Activated CD4-positive, alpha-beta T cell treated with anti-CD3 and anti-CD28 coated beads, Interleukin-2, amount 10 ng/mL, durations not matched to agents 24 days and 14 days (primary cell): ENCODE measurements at regions of chr9 and their contacts with region 1.

Region 1: DNA sequence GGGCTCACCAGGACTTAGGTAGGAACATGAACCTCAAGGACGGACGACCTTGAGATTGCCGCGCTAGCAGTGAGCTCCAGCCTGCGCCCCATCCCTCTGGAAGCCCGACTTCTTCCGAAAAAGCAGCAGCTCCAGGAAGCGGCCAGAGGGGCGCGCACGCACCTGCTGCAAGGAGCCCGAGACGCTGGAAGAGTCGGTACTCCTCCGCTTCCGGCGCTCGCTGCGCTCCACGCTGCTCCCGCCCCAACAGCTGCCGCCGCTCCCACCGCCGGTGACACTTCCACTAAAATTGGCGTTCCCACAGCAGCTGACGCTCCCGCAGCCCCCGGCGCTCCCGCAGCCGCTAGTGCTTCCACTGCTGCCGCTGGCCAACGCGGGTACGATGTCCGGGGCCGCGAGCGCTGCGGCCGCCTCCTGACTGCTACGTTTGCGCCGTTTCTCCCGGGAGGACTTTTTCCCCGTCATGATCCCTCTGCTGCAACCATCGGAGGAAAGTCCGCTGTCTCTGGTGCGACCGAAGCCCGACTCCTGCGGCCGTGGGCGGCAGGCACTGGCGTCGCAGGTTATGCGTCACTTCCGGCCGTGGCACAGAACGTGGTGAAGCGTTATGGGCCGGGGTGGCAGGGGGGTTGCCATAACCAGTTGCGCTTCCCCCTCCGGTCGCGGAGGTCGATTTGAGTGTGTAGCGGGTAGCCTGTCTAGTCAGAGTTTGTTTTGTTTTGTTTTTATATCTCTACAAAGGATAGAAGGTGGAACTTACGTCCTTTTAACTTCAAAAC is at the start of gene CAAP1:
- DNase-seq: peak; percentile 97
- H3K4me3 Mint-ChIP-seq: peak within 1 kb of the TSS; percentile 91
- H3K27ac Mint-ChIP-seq: peak within 1 kb of the TSS; percentile 97
- H3K4me1 Mint-ChIP-seq: peaks cover 27% of the 10 kb centered on the region
- H3K27me3 Mint-ChIP-seq: no peaks in the 10 kb centered on the region
- total RNA-seq, gene CAAP1: 19.9 and 23.1 TPM in 2 replicates

Region 2: GRCh38 chr9:26710008-26710407 is 182.4 kb before region 1 on chr9:
- intact Hi-C with region 1: no loop called
- DNase-seq: no peak
- H3K4me3 Mint-ChIP-seq: no peak overlapping the region
- H3K27ac Mint-ChIP-seq: no peak overlapping the region
- H3K4me1 Mint-ChIP-seq: no peaks in the 10 kb centered on the region
- H3K27me3 Mint-ChIP-seq: no peaks in the 10 kb centered on the region

Region 3: DNA sequence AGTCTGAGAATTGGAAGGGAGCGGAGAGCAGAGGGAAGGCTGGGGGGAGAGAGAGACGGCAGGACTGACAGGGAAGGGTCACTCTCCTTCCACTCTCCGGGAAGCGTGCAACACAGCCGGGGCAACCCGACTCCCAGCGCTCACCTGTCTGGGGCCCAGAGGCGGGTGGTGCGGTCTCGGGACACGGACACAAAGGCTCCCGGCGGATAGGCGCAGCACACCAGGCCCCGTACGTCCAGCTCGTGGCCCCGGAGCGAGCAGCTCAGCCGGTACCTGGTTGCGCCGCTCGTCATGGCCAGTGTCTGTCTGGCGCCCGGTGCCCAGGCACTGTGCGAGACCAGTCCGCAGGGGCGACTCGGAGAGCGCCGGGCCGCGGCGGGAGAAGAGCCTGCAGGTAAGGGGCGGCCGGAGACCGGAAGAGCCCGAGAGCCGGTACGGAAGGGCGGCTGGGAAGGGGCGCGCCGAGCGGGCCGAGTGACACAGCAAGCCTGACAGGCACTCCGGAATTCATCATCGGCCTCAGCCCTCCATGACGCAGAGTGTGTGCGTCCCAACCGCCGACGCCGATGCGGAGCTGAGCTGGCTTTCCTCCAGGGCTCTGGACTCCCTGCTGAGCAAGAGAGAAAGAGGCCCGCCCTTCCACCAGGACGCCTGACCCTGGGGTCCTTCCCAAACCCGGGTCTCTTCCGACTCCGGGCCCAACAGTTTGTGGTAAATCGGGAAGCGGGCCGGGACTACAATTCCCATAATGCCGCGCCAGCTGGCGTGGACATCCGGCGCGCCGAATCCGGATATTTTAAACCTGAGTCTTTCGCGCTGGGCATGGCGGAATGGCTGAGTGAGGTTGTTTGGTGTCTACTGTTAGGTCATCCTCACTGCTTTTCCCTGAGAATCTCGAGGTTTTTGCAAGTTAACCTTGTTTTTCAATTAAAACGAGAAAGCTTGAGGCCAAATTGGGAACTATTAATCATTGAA is 54.6 kb after region 1 on chr9 and contains the start of gene PLAA:
- intact Hi-C with region 1: loop called (anchors 2 kb)
- DNase-seq: peak; percentile 96
- H3K4me3 Mint-ChIP-seq: peak within 1 kb of the TSS; percentile 87
- H3K27ac Mint-ChIP-seq: peak within 1 kb of the TSS; percentile 96
- H3K4me1 Mint-ChIP-seq: peaks cover 36% of the 10 kb centered on the region
- H3K27me3 Mint-ChIP-seq: no peaks in the 10 kb centered on the region
- total RNA-seq, gene PLAA: 45.7 and 47.0 TPM in 2 replicates

Region 4: GRCh38 chr9:26955921-26956859 is 63.8 kb after region 1 on chr9 and contains the start of gene IFT74:
- intact Hi-C with region 1: loop called (anchors 2 kb)
- DNase-seq: peak; percentile 99
- H3K4me3 Mint-ChIP-seq: peak within 1 kb of the TSS; percentile 95
- H3K27ac Mint-ChIP-seq: peak within 1 kb of the TSS; percentile 94
- H3K4me1 Mint-ChIP-seq: peaks cover 20% of the 10 kb centered on the region
- H3K27me3 Mint-ChIP-seq: no peaks in the 10 kb centered on the region
- total RNA-seq, gene IFT74: 9.7 and 10.6 TPM in 2 replicates

Region 5: DNA sequence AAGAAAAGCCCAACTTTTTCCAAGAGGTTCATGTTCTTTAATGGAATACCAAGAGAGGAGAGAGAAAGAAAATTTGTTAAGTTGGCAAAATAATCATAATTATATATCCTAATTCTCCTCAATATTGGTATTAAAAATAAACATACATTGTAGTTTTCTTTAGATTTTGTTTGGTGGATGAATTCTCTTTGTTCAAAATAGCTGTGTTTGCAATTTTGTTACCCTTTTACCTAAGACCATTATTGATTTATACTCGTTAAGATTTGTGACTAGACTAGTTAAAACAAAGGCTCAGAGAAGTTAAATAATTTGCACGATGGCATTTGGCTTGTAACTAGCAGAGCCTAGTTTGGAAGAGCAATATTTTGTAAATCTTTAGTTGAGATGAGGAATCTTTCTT is 103.4 kb after region 1 on chr9:
- intact Hi-C with region 1: no loop called
- DNase-seq: no peak
- H3K4me3 Mint-ChIP-seq: no peak overlapping the region
- H3K27ac Mint-ChIP-seq: no peak overlapping the region
- H3K4me1 Mint-ChIP-seq: no peaks in the 10 kb centered on the region
- H3K27me3 Mint-ChIP-seq: no peaks in the 10 kb centered on the region